Sigmoid colon (tissue), 7 donors: ENCODE measurements at regions of chr12 and their contacts with region 1.

Region 1: GRCh38 chr12:108193917-108194316 is 64.8 kb downstream of the WSCD2 start:
- DNase-seq: no peak
- H3K4me3 ChIP-seq: no peak overlapping the region
- H3K27ac ChIP-seq: no peak overlapping the region
- H3K4me1 ChIP-seq: peaks cover 0 to 23% (median 19%) of the 10 kb centered on the region in 4 donors
- H3K27me3 ChIP-seq: no peaks in the 10 kb centered on the region
- CTCF ChIP-seq: peak; percentile 39 to 69 (median 50)
- EP300 ChIP-seq: no peak
- POLR2A ChIP-seq: no peak

Region 2: GRCh38 chr12:107760809-107761501 is 433.0 kb before region 1 on chr12 and contains the start of gene PRDM4:
- intact Hi-C with region 1: loop called (anchors 10 kb)
- DNase-seq: peak; percentile 97
- H3K4me3 ChIP-seq: peak within 1 kb of the TSS; percentile 84 to 94 (median 86)
- H3K27ac ChIP-seq: peak within 1 kb of the TSS; percentile 67 to 80 (median 76)
- H3K4me1 ChIP-seq: peaks cover 0 to 34% (median 25%) of the 10 kb centered on the region in 4 donors
- H3K27me3 ChIP-seq: no peaks in the 10 kb centered on the region
- CTCF ChIP-seq: peak in 1 of 4 experiments; percentile 29
- EP300 ChIP-seq: no peak
- POLR2A ChIP-seq: peak; percentile 46 to 54
- total RNA-seq, gene PRDM4: 19.7 to 25.7 (median 23.0) TPM

Region 3: DNA sequence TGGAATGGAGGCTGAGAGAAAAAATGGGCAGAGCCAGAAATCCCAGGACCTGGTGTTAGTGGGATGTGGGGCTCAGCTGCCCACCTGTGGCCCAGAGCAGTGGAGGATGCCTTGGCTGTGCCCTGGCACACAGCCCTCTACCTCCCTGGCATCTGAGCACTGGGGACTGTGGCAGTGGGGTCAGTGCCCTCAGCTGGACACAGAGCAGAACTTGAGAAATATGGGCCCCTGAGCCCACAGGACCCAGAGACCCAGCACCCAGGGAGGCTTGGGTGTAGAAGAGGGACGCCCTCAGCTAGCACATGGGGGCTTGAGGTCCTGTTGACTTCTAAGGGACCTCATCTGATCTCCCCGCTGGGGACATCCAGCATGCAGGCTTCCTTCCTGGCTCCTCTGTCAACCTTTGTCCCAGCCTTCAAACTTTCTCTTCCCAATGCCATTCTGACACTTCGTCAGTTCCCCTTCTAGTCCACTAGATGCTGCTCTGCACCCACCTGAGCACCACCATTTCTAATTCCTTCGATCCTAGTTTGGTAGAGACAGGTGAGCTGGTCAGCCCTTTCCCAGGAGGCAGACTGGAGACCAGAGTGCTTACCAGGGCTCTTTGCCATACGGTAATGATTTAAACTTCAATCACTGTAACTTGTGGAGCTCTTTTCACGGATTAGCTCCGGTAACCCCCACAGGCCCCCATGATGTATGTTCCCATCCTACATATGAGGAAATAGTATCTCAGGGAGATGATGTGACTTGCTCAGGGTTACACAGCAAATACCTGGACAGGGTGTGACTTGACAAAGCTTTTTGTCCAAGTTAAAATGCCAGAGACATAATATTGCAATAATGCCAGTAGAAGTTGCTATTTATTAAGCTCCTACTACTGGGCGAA is 275.8 kb before region 1 on chr12:
- intact Hi-C with region 1: loop called (anchors 1 kb)
- DNase-seq: no peak
- H3K4me3 ChIP-seq: no peak overlapping the region
- H3K27ac ChIP-seq: no peak overlapping the region
- H3K4me1 ChIP-seq: no peaks in the 10 kb centered on the region
- H3K27me3 ChIP-seq: peaks cover 0 to 38% (median 5%) of the 10 kb centered on the region in 3 donors
- CTCF ChIP-seq: peak in 2 of 4 experiments; percentile 35 to 37
- EP300 ChIP-seq: no peak
- POLR2A ChIP-seq: no peak

Region 4: GRCh38 chr12:107992870-107993451 is 201.0 kb before region 1 on chr12:
- intact Hi-C with region 1: loop called (anchors 5 kb)
- DNase-seq: no peak
- H3K4me3 ChIP-seq: no peak overlapping the region
- H3K27ac ChIP-seq: no peak overlapping the region
- H3K4me1 ChIP-seq: no peaks in the 10 kb centered on the region
- H3K27me3 ChIP-seq: no peaks in the 10 kb centered on the region
- CTCF ChIP-seq: peak in 1 of 4 experiments; percentile 32
- EP300 ChIP-seq: no peak
- POLR2A ChIP-seq: no peak

Region 5: DNA sequence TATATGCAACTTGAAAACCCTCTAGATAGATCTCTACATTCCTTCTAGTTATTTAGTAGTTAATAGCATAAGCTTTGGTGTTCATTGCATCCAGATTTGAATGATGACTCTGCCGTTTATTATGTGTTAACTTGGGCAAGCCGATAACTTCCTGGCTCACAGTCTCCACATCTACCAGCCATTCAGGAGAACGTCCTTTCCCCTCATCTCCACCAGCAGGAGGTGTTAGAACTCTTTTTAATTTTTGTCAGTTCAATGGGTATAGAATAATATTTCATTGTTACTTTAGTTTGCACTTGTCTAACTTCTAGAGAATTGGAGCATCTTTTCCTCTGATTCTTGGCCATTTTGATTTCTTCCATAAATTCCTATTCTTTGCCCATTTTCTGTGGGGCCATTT is 94.8 kb before region 1 on chr12:
- intact Hi-C with region 1: loop called (anchors 2 kb)
- DNase-seq: no peak
- H3K4me3 ChIP-seq: no peak overlapping the region
- H3K27ac ChIP-seq: no peak overlapping the region
- H3K4me1 ChIP-seq: peaks cover 0 to 9% (median 3%) of the 10 kb centered on the region in 4 donors
- H3K27me3 ChIP-seq: no peaks in the 10 kb centered on the region
- CTCF ChIP-seq: peak in 3 of 4 experiments; percentile 9 to 43 (median 29)
- EP300 ChIP-seq: no peak
- POLR2A ChIP-seq: no peak

Region 6: DNA sequence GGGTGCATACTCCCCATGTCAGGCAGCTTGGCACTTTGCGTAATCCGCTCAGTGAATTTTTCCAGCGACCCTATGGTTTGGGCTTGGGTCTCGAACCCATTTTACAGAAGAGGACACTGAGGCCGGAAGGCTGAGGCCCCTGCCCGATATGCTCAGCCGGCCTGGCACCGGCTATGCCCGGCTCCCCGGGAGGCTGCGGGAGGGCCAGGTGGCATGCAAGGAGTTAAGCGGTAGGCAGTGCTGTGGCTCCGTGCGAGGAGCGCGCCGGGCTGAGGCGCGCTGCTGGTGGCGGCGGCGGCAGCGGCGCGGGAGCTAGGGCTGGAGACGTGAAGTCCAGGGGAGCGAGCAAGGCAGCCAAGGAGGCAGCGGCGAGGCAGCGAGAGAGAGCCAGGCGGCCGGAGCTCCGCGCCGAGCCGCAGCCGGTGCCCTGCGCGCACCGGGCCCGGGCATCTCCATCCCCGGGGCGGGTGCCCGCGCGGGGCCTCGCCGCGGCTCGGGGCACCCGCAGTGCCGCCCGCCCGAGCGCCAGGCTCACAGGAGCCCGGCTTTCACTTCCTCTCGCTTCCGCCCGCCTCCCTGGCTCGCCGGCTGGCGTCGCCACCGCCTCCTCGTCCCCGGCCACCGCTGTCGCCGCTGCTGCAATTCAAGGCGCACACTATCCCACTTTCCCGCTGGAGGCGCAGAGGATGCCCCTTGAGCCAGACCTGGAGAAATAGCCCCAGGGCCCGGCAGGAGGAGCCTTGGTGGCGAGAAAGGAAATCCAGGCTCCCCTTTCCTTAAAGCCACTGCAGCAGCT is 64.7 kb before region 1 on chr12 and contains the start of gene WSCD2:
- intact Hi-C with region 1: loop called (anchors 2 kb)
- DNase-seq: peak; percentile 77
- H3K4me3 ChIP-seq: peak within 1 kb of the TSS; percentile 32 to 68 (median 53)
- H3K27ac ChIP-seq: peak within 1 kb of the TSS; percentile 71 to 92 (median 82)
- H3K4me1 ChIP-seq: peaks cover 0 to 47% (median 29%) of the 10 kb centered on the region in 4 donors
- H3K27me3 ChIP-seq: peaks cover 0 to 13% (median 0%) of the 10 kb centered on the region in 3 donors
- CTCF ChIP-seq: peak in 2 of 4 experiments; percentile 23 to 26
- EP300 ChIP-seq: no peak
- POLR2A ChIP-seq: no peak
- total RNA-seq, gene WSCD2: 1.6 to 10.5 (median 3.8) TPM

Region 7: GRCh38 chr12:108297895-108298760 is 104.2 kb after region 1 on chr12:
- intact Hi-C with region 1: no loop called
- DNase-seq: peak; percentile 5
- H3K4me3 ChIP-seq: no peak overlapping the region
- H3K27ac ChIP-seq: no peak overlapping the region
- H3K4me1 ChIP-seq: peaks cover 0 to 9% (median 1%) of the 10 kb centered on the region in 4 donors
- H3K27me3 ChIP-seq: no peaks in the 10 kb centered on the region
- CTCF ChIP-seq: no peak
- EP300 ChIP-seq: no peak
- POLR2A ChIP-seq: no peak